SK-N-SH (cell line): ENCODE measurements at regions of chr4 and their contacts with region 1.

Region 1: GRCh38 chr4:173990126-173990868 is 293.2 kb downstream of the FBXO8 start:
- DNase-seq: no peak
- H3K4me3 ChIP-seq: 0 out of 4 replicates have a peak overlapping the region, but pooled peaks of 1 of the 2 experiments have one; percentile 2
- H3K27ac ChIP-seq: peak overlapping the region; percentile 15 to 100
- H3K4me1 ChIP-seq: peaks cover 18 to 34% of the 10 kb centered on the region in 2 experiments; a peak in 3 of 4 replicates
- H3K27me3 ChIP-seq: no peaks in the 10 kb centered on the region
- CTCF ChIP-seq: peak; percentile 85
- EP300 ChIP-seq: peak in 1 of 2 experiments; percentile 22; a peak in 1 of 4 replicates
- RAD21 ChIP-seq: peak; percentile 85

Region 2: GRCh38 chr4:173218411-173219125 is 771.7 kb before region 1 on chr4:
- CTCF ChIA-PET with region 1: no interaction called
- POLR2A ChIA-PET with region 1: no interaction called
- DNase-seq: no peak
- H3K4me3 ChIP-seq: no peak overlapping the region
- H3K27ac ChIP-seq: peak overlapping the region in 1 of 2 experiments; percentile 62; a peak in 2 of 4 replicates
- H3K4me1 ChIP-seq: peaks cover 6 to 37% of the 10 kb centered on the region in 2 experiments; a peak in 3 of 4 replicates
- H3K27me3 ChIP-seq: no peaks in the 10 kb centered on the region
- CTCF ChIP-seq: peak; percentile 10; the same call in 1 of the 2 replicates
- EP300 ChIP-seq: peak in 1 of 2 experiments; percentile 44; a peak in 1 of 4 replicates
- RAD21 ChIP-seq: no peak

Region 3: GRCh38 chr4:173516621-173517524 is 473.4 kb before region 1 on chr4:
- CTCF ChIA-PET with region 1: interaction called, 17 read pairs
- POLR2A ChIA-PET with region 1: interaction called, 160 read pairs
- DNase-seq: peak; percentile 70
- H3K4me3 ChIP-seq: peak overlapping the region; percentile 50 to 58
- H3K27ac ChIP-seq: peak overlapping the region; percentile 99
- H3K4me1 ChIP-seq: peaks cover 20 to 45% of the 10 kb centered on the region in 2 experiments
- H3K27me3 ChIP-seq: no peaks in the 10 kb centered on the region
- CTCF ChIP-seq: peak; percentile 29
- EP300 ChIP-seq: no peak
- RAD21 ChIP-seq: 0 out of 2 replicates have a peak, but pooled peaks have one; percentile 14

Region 4: GRCh38 chr4:173752610-173753230 is 237.6 kb before region 1 on chr4:
- CTCF ChIA-PET with region 1: interaction called, 27 read pairs
- POLR2A ChIA-PET with region 1: interaction called, 4 read pairs
- DNase-seq: no peak
- H3K4me3 ChIP-seq: no peak overlapping the region
- H3K27ac ChIP-seq: peak overlapping the region in 1 of 2 experiments; percentile 94; a peak in 2 of 4 replicates
- H3K4me1 ChIP-seq: peaks cover 0 to 13% of the 10 kb centered on the region in 2 experiments; a peak in 2 of 4 replicates
- H3K27me3 ChIP-seq: no peaks in the 10 kb centered on the region
- CTCF ChIP-seq: peak; percentile 59
- EP300 ChIP-seq: no peak
- RAD21 ChIP-seq: peak; percentile 32

Region 5: DNA sequence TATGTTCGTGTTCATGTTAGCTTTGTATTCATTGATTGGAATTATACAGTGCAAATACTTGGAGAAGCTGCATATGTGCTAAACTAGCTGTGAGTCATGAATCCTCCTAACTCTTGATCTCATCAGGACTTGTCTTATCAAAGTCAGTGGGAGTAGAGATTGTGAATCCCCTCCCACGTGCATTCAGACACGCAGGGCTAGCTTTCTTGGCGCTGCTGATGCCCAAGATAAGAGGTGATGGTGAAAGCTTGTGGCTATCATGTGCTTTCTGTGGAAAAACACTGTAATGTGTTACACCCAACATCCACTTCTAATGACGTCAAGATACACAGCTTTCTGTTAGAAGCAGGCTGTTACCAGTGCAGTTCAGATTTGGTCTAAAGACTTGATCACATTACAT is 111.6 kb before region 1 on chr4:
- CTCF ChIA-PET with region 1: interaction called, 12 read pairs
- POLR2A ChIA-PET with region 1: interaction called, 4 read pairs
- DNase-seq: peak; percentile 30
- H3K4me3 ChIP-seq: no peak overlapping the region
- H3K27ac ChIP-seq: peak overlapping the region in 1 of 2 experiments; percentile 84; a peak in 2 of 4 replicates
- H3K4me1 ChIP-seq: peaks cover 5 to 7% of the 10 kb centered on the region in 2 experiments; a peak in 3 of 4 replicates
- H3K27me3 ChIP-seq: no peaks in the 10 kb centered on the region
- CTCF ChIP-seq: no peak
- EP300 ChIP-seq: peak in 1 of 2 experiments; percentile 85; a peak in 2 of 4 replicates
- RAD21 ChIP-seq: no peak; the same call in 1 of the 2 replicates

Region 6: DNA sequence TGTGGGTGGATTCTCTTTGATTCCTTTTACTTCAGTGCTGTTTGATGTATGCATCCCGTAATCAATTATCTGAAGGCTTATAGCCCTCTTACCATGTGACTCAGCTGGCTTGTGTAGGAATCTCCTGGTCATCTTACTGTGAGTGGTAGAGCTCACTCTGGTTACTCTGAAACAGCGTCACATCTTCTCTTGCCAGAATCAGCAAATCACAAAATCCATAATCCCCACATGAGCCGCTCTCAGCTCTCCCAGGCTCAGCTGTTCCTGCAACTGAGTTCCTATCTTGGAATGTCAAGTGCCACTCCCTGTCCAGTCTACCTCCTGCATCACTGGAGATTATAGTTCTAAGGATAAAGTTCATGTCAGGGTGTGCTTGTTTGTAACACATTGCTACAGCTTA is 15.1 kb after region 1 on chr4:
- CTCF ChIA-PET with region 1: interaction called, 37 read pairs
- POLR2A ChIA-PET with region 1: interaction called, 52 read pairs
- DNase-seq: no peak
- H3K4me3 ChIP-seq: no peak overlapping the region
- H3K27ac ChIP-seq: peak overlapping the region in 1 of 2 experiments; percentile 100; a peak in 2 of 4 replicates
- H3K4me1 ChIP-seq: peaks cover 5 to 27% of the 10 kb centered on the region in 2 experiments; a peak in 3 of 4 replicates
- H3K27me3 ChIP-seq: no peaks in the 10 kb centered on the region
- CTCF ChIP-seq: no peak
- EP300 ChIP-seq: peak in 1 of 2 experiments; percentile 22; a peak in 1 of 4 replicates
- RAD21 ChIP-seq: no peak

Region 7: GRCh38 chr4:174260099-174260498 is 269.8 kb after region 1 on chr4:
- CTCF ChIA-PET with region 1: interaction called, 10 read pairs
- POLR2A ChIA-PET with region 1: interaction called, 3 read pairs
- DNase-seq: peak; percentile 30
- H3K4me3 ChIP-seq: peak overlapping the region in 1 of 2 experiments; percentile 33; a peak in 2 of 4 replicates
- H3K27ac ChIP-seq: peak overlapping the region; percentile 30 to 98; a peak in 3 of 4 replicates
- H3K4me1 ChIP-seq: peaks cover 32 to 36% of the 10 kb centered on the region in 2 experiments
- H3K27me3 ChIP-seq: no peaks in the 10 kb centered on the region
- CTCF ChIP-seq: no peak
- EP300 ChIP-seq: peak in 1 of 2 experiments; percentile 94; a peak in 3 of 4 replicates
- RAD21 ChIP-seq: no peak